Esophagus squamous epithelium (tissue), 5 donors: ENCODE measurements at regions of chr6 and their contacts with region 1.

Region 1: DNA sequence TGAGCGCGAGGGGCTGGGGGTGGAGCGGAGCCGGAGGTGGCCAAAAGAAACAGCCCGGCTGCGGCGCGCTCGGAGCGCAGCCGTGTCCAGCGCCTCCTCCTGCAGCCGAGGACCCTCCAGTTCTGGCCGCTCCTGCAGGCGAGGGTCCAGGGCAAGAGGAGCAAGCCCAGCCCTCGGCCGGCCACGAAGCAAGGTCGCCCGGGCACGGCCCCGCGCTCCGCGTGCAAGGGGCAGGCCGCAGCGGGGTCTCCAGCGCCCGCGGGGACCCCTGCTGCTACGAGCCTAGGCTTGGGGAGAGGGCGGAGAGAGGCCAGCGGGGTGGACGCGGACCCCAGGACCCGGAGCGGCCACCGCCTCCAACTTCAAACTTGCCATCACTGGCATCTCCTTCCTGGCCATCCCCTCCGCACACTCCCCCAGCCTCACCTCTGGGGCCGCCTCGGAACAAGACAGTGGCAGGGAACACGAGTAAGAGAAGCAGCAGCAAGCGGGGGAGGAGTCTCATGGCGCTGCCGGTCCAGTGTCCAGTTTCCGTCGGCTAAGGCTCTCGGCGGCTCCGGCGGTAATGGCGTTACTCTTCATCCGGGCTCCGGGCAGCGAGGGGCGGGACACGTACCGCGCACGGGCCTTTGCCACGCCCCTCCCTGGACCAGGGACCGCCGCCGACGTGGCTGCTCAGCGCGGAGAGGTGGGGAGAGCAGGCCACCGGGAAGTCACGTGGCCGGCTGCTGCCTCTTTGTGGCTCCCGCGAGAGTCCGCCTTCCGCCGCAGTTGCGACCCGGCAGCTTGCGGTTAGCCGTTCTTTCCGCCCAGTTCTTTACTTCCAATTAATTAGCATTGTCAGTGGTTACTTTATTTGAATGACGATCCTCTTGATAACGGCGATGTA is at the start of gene SSR1:
- DNase-seq: peak; percentile 92
- H3K4me3 ChIP-seq: peak within 1 kb of the TSS; percentile 74 to 99 (median 90)
- H3K27ac ChIP-seq: peak within 1 kb of the TSS; percentile 93 to 97 (median 96)
- H3K4me1 ChIP-seq: peaks cover 0 to 45% (median 27%) of the 10 kb centered on the region in 3 donors
- H3K27me3 ChIP-seq: no peaks in the 10 kb centered on the region
- CTCF ChIP-seq: no peak
- POLR2A ChIP-seq: peak in 2 of 4 donors; percentile 33 to 84
- total RNA-seq, gene SSR1: 39.5 to 122 (median 80.8) TPM

Region 2: DNA sequence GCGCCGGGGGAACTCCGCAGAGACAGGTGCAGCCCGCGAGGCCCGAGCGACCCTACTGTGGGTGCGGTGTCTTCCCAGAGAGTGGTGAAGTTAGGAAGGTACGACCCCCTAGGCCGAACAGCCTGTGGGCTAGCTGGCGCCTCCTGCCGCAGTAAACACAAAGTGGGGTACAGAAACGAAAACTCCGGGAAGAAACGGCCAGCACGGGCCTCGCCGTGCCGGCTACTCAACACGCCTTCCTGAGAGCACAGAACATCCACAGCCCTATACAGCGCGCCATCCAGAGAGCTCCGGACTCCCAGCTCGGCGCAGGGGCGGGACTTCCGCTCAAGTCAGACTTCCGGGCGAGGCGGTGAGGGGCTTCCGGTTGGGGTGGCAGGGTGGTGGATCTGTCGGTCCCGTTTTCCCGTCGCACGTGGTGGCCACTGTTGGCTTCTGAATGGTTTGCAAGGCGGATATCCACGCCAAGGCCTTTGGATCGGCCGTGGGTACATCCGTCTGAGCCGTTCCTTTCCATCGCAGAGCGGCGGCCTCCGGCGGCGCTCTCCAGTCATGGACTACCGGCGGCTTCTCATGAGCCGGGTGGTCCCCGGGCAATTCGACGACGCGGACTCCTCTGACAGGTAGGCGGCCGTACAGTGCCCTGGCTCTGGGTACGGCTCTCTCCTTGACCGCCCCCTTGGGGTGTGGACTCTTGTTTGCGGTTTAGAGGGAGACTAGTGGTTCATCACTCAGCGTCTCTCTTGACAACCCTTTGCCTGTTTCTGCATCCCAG is 76.8 kb after region 1 on chr6 and contains the starts of genes CAGE1 and RIOK1:
- intact Hi-C with region 1: loop called (anchors 10 kb)
- DNase-seq: peak; percentile 84
- H3K4me3 ChIP-seq: peak within 1 kb of the TSS; percentile 62 to 96 (median 83)
- H3K27ac ChIP-seq: peak within 1 kb of the TSS; percentile 89 to 97 (median 96)
- H3K4me1 ChIP-seq: peaks cover 19 to 44% (median 24%) of the 10 kb centered on the region in 3 donors
- H3K27me3 ChIP-seq: no peaks in the 10 kb centered on the region
- CTCF ChIP-seq: peak in 4 of 6 experiments; percentile 2 to 24 (median 14)
- POLR2A ChIP-seq: peak in 3 of 4 donors; percentile 76 to 86 (median 78)
- total RNA-seq, gene CAGE1: 0.09 TPM in 1 of 4 donors, not detected in the others
- total RNA-seq, gene RIOK1: 9.3 to 28.2 (median 22.9) TPM